K562 (cell line): ENCODE measurements at regions of chr3 and their contacts with region 1.

Region 1: DNA sequence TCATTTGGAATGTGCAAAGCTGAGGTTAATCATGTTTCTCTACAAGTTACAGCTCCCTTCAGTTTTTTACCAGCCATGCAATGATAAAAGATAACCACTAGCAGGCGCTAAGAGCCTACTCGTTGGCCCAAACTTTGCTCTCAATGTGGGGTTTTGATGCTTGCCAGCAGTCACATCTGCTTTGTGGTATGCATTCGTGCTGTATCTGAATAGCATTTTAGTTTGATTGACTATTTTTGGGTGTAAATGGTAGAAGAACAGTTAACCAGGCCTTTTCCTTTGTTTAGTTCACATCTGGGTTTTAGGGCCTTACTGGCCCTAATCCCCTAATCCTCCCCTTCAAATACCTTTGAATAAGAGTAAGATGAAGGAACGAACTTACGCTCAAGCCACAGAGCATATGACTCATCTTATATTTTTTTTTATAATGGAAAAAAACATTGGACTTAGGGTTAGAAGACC is 4.4 kb upstream of the CLDN11 start:
- DNase-seq: peak; percentile 58 to 75 (median 63)
- ATAC-seq: peak; percentile 85
- H3K4me3 ChIP-seq: no peak overlapping the region
- H3K27ac ChIP-seq: no peak overlapping the region
- H3K4me1 ChIP-seq: peaks cover 0 to 9% of the 10 kb centered on the region in 2 experiments; a peak in 1 of 5 replicates
- H3K27me3 ChIP-seq: no peaks in the 10 kb centered on the region
- CTCF ChIP-seq: peak; percentile 91 to 98 (median 93)
- EP300 ChIP-seq: no peak
- POLR2A ChIP-seq: no peak
- RAD21 ChIP-seq: peak; percentile 99

Region 2: GRCh38 chr3:169863458-169863899 is 550.8 kb before region 1 on chr3:
- CTCF ChIA-PET with region 1: no interaction called
- POLR2A ChIA-PET with region 1: no interaction called
- in situ Hi-C with region 1: no loop called
- intact Hi-C with region 1: loop called (anchors 5 kb)
- DNase-seq: peak; percentile 64 to 86 (median 76)
- ATAC-seq: peak; percentile 89
- H3K4me3 ChIP-seq: no peak overlapping the region
- H3K27ac ChIP-seq: no peak overlapping the region
- H3K4me1 ChIP-seq: no peaks in the 10 kb centered on the region; a peak in 1 of 5 replicates
- H3K27me3 ChIP-seq: no peaks in the 10 kb centered on the region
- CTCF ChIP-seq: peak; percentile 86 to 93 (median 89)
- EP300 ChIP-seq: no peak
- POLR2A ChIP-seq: no peak
- RAD21 ChIP-seq: peak; percentile 90 to 95

Region 3: GRCh38 chr3:170154569-170155143 is 259.6 kb before region 1 on chr3:
- CTCF ChIA-PET with region 1: no interaction called
- POLR2A ChIA-PET with region 1: no interaction called
- in situ Hi-C with region 1: no loop called
- intact Hi-C with region 1: no loop called
- DNase-seq: peak in 2 of 4 experiments; percentile 60 to 61
- ATAC-seq: peak; percentile 85
- H3K4me3 ChIP-seq: no peak overlapping the region
- H3K27ac ChIP-seq: peak overlapping the region; percentile 71
- H3K4me1 ChIP-seq: peaks cover 4 to 14% of the 10 kb centered on the region in 2 experiments; a peak in 4 of 5 replicates
- H3K27me3 ChIP-seq: no peaks in the 10 kb centered on the region
- CTCF ChIP-seq: no peak
- EP300 ChIP-seq: no peak
- POLR2A ChIP-seq: no peak
- RAD21 ChIP-seq: no peak

Region 4: GRCh38 chr3:170189398-170190256 is 224.6 kb before region 1 on chr3:
- CTCF ChIA-PET with region 1: interaction called, 4 read pairs
- POLR2A ChIA-PET with region 1: no interaction called
- in situ Hi-C with region 1: no loop called
- intact Hi-C with region 1: loop called (anchors 5 kb)
- DNase-seq: no peak
- ATAC-seq: peak; percentile 38
- H3K4me3 ChIP-seq: no peak overlapping the region
- H3K27ac ChIP-seq: no peak overlapping the region
- H3K4me1 ChIP-seq: no peaks in the 10 kb centered on the region
- H3K27me3 ChIP-seq: no peaks in the 10 kb centered on the region
- CTCF ChIP-seq: no peak
- EP300 ChIP-seq: no peak
- POLR2A ChIP-seq: no peak
- RAD21 ChIP-seq: no peak

Region 5: DNA sequence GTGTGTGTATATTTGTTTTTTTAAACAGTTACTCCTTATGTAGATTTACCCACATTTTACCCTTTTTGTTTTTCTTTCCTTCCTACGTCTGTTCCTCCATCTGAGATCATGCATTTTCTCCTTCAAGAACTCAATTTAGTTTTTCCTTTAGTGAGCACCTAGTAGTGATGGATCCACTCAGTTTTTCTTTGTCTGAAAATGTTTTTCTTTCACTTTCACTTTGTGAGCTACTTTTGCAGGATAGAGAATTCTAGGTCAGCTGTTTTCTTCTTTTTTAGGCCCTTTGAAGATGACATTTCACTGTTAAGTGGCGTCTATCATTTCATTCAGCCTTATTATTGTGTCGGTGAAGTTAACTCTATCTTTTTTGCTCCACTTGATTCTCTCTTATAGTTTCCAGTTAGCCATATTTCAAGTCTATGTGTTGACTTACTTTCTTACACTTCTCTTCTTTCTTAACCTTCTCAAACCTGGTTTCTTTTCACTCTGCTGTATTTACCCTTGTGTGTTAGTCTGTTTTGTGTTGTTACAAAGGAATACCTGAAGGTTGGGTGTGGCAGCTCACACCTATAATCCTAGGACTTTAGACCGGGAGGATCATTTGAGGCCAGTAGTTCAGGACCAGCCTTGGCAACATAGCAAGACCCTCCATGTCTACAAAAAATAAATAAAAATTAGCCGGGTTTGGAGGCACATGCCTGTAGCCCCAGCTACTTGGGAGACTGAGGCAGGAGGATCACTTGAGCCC is 136.2 kb before region 1 on chr3:
- CTCF ChIA-PET with region 1: no interaction called
- POLR2A ChIA-PET with region 1: no interaction called
- in situ Hi-C with region 1: no loop called
- intact Hi-C with region 1: no loop called
- DNase-seq: no peak
- ATAC-seq: no peak
- H3K4me3 ChIP-seq: no peak overlapping the region
- H3K27ac ChIP-seq: no peak overlapping the region
- H3K4me1 ChIP-seq: no peaks in the 10 kb centered on the region
- H3K27me3 ChIP-seq: no peaks in the 10 kb centered on the region
- CTCF ChIP-seq: no peak
- EP300 ChIP-seq: no peak
- POLR2A ChIP-seq: no peak
- RAD21 ChIP-seq: no peak

Region 6: GRCh38 chr3:170357176-170357919 is 56.9 kb before region 1 on chr3 and contains the start of gene SKIL:
- CTCF ChIA-PET with region 1: no interaction called
- POLR2A ChIA-PET with region 1: no interaction called
- in situ Hi-C with region 1: no loop called
- intact Hi-C with region 1: loop called (anchors 2 kb)
- DNase-seq: peak; percentile 82 to 97 (median 86)
- ATAC-seq: peak; percentile 73
- H3K4me3 ChIP-seq: peak within 1 kb of the TSS; percentile 80
- H3K27ac ChIP-seq: peak within 1 kb of the TSS; percentile 95
- H3K4me1 ChIP-seq: peaks cover 9 to 38% of the 10 kb centered on the region in 2 experiments
- H3K27me3 ChIP-seq: no peaks in the 10 kb centered on the region
- CTCF ChIP-seq: peak in 2 of 3 experiments; percentile 28 to 39; a peak in 4 of 6 replicates
- EP300 ChIP-seq: peak; percentile 64; the same call in 1 of the 2 replicates
- POLR2A ChIP-seq: no peak; the same call in 1 of the 2 replicates
- RAD21 ChIP-seq: no peak
- polyA plus RNA-seq, gene SKIL: 4.4 to 9.7 TPM

Region 7: DNA sequence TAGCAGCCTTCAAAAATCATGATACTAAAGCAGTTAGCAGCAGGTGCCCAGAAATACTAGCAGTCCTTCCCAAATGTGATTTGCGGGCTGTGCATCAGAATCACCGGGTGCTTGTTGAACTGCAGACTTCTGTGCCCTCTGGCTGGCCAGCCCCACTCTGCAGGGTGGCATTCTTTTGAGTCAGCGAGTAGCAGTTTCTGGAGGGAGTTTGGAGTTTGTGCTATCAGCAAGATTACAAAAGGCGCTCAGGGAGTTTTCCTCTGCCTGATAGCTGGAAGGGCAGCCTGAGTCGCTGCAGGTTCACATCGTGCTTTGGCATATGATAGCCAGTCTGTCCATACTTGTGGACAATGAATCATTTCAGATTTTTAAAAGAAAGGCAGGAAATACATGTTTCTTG is 62.1 kb after region 1 on chr3:
- CTCF ChIA-PET with region 1: no interaction called
- POLR2A ChIA-PET with region 1: no interaction called
- in situ Hi-C with region 1: no loop called
- intact Hi-C with region 1: no loop called
- DNase-seq: no peak
- ATAC-seq: no peak
- H3K4me3 ChIP-seq: no peak overlapping the region
- H3K27ac ChIP-seq: no peak overlapping the region
- H3K4me1 ChIP-seq: no peaks in the 10 kb centered on the region
- H3K27me3 ChIP-seq: peaks cover 14 to 33% of the 10 kb centered on the region in 2 experiments; a peak in 4 of 5 replicates
- CTCF ChIP-seq: no peak
- EP300 ChIP-seq: no peak
- POLR2A ChIP-seq: no peak
- RAD21 ChIP-seq: no peak

Region 8: DNA sequence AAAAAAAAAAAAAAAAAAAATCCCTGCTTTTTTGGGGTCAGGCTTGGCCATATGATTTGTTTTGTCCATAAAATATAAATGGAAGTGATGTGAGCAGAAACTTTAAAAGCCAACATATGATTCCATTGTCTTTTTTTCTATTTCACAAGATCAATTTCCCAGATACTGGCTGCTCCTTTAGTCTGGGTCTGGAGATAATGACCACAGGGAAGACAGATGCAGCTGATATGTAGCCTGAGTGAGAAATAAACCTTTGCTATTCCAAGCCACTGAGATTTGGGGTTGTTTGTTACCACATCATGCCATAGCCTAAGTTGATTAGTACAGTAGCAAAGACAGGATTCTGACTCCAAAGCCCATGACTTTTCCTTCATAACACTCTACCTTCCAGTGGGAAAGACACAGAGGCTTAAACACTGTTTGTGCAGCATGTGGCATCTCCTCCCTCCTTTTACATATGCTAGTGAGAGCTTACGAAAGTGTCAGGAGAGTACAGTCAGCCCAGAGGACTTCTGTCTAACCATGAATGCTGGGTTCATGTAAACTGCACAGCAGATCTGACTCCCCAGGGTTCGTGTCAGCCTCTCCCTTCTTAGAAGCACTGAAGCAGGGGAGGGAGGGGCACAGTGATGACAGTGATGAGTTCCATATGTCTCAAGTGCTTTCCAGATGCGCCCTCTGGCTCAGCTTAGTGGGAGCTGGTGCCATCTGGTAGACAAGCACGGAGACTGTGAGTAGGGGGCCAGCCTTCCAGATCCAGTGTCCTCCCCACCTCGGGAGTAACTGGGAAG is 208.3 kb after region 1 on chr3:
- CTCF ChIA-PET with region 1: no interaction called
- POLR2A ChIA-PET with region 1: no interaction called
- in situ Hi-C with region 1: no loop called
- intact Hi-C with region 1: loop called (anchors 5 kb)
- DNase-seq: peak; percentile 20 to 68 (median 44)
- ATAC-seq: peak; percentile 96
- H3K4me3 ChIP-seq: no peak overlapping the region
- H3K27ac ChIP-seq: no peak overlapping the region
- H3K4me1 ChIP-seq: peaks cover 4 to 8% of the 10 kb centered on the region in 2 experiments; a peak in 3 of 5 replicates
- H3K27me3 ChIP-seq: no peaks in the 10 kb centered on the region
- CTCF ChIP-seq: no peak
- EP300 ChIP-seq: no peak
- POLR2A ChIP-seq: no peak
- RAD21 ChIP-seq: no peak

Region 9: GRCh38 chr3:170848292-170848917 is 434.2 kb after region 1 on chr3:
- CTCF ChIA-PET with region 1: interaction called, 9 read pairs
- POLR2A ChIA-PET with region 1: interaction called, 3 read pairs
- in situ Hi-C with region 1: no loop called
- intact Hi-C with region 1: loop called (anchors 1 kb)
- DNase-seq: peak in 1 of 4 experiments; percentile 19
- ATAC-seq: 0 out of 3 replicates have a peak, but pooled peaks have one; percentile 42
- H3K4me3 ChIP-seq: no peak overlapping the region
- H3K27ac ChIP-seq: no peak overlapping the region
- H3K4me1 ChIP-seq: no peaks in the 10 kb centered on the region
- H3K27me3 ChIP-seq: no peaks in the 10 kb centered on the region; a peak in 1 of 5 replicates
- CTCF ChIP-seq: peak in 1 of 3 experiments; percentile 68; a peak in 4 of 6 replicates
- EP300 ChIP-seq: no peak
- POLR2A ChIP-seq: no peak
- RAD21 ChIP-seq: peak; percentile 77 to 83